Esophagus muscularis mucosa (tissue), 4 donors: ENCODE measurements at regions of chr4 and their contacts with region 1.

Region 1: GRCh38 chr4:81405894-81406401 is 65.8 kb downstream of the RASGEF1B start:
- DNase-seq: no peak
- H3K4me3 ChIP-seq: peak overlapping the region in 3 of 4 donors; percentile 10 to 19 (median 17)
- H3K27ac ChIP-seq: no peak overlapping the region
- H3K4me1 ChIP-seq: peaks cover 0 to 9% (median 4%) of the 10 kb centered on the region in 4 donors
- H3K27me3 ChIP-seq: no peaks in the 10 kb centered on the region
- CTCF ChIP-seq: peak; percentile 72 to 85 (median 81)
- EP300 ChIP-seq: no peak
- POLR2A ChIP-seq: no peak

Region 2: DNA sequence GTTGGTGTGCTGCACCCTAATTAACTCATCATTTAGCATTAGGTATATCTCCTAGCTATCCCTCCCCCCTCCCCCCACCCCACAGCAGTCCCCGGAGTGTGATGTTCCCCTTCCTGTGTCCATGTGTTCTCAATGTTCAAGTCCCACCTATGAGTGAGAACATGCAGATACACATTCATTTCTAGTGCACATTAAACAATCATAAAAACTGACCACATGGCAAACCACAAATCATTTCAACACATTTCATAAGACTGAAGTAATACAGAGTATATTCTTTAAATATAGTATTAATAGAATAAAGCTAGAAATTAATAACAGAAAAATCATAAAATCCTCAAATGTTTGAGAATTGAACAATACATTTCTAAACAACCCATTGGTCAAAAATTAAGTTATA is 225.0 kb before region 1 on chr4:
- intact Hi-C with region 1: no loop called
- DNase-seq: no peak
- H3K4me3 ChIP-seq: no peak overlapping the region
- H3K27ac ChIP-seq: no peak overlapping the region
- H3K4me1 ChIP-seq: peaks cover 0 to 5% (median 0%) of the 10 kb centered on the region in 4 donors
- H3K27me3 ChIP-seq: no peaks in the 10 kb centered on the region
- CTCF ChIP-seq: no peak
- EP300 ChIP-seq: no peak
- POLR2A ChIP-seq: no peak

Region 3: GRCh38 chr4:81353861-81354260 is 52.1 kb before region 1 on chr4:
- intact Hi-C with region 1: no loop called
- DNase-seq: no peak
- H3K4me3 ChIP-seq: no peak overlapping the region
- H3K27ac ChIP-seq: no peak overlapping the region
- H3K4me1 ChIP-seq: no peaks in the 10 kb centered on the region
- H3K27me3 ChIP-seq: no peaks in the 10 kb centered on the region
- CTCF ChIP-seq: no peak
- EP300 ChIP-seq: no peak
- POLR2A ChIP-seq: no peak

Region 4: GRCh38 chr4:81844717-81845116 is 438.8 kb after region 1 on chr4:
- intact Hi-C with region 1: loop called (anchors 5 kb)
- DNase-seq: no peak
- H3K4me3 ChIP-seq: no peak overlapping the region
- H3K27ac ChIP-seq: no peak overlapping the region
- H3K4me1 ChIP-seq: peaks cover 0 to 5% (median 2%) of the 10 kb centered on the region in 4 donors
- H3K27me3 ChIP-seq: no peaks in the 10 kb centered on the region
- CTCF ChIP-seq: peak; percentile 78 to 83 (median 81)
- EP300 ChIP-seq: no peak
- POLR2A ChIP-seq: no peak

Region 5: DNA sequence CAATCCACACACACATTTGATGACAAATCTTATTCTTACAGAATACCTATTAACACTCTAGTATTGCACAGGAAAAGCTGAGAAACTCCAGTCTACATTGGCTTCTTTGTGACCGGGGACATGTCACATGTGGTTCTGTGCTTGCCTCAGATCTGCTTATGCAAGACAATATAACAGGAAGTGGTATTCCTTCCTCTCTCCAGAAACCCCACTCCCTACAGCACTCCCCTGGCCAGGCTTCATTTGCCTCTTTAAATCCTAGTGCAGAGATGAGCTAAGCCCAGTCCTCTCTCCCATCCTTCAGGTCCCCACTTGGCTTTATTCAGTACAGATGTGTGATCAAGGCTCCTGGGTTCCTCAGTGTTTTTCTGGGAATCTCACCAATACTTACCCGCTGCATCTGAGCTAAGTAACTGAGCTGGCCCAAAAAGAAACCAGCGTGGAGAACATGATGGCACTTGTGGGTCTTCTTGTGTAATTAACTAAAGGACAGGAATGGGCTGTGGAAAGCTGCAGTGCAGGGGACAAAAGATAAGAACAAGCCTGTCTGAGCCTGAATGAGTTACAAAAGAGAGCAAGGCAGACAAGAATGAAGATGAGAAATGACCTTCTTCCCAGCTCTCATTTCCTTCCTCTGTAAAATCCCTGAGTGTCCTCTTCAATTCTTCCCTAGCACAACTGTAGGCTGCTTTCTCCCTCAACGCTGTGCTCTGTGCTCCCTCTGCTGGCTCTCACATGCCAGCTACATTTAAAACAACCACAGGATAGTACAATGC is 862.3 kb after region 1 on chr4:
- intact Hi-C with region 1: loop called (anchors 2 kb)
- DNase-seq: no peak
- H3K4me3 ChIP-seq: no peak overlapping the region
- H3K27ac ChIP-seq: no peak overlapping the region
- H3K4me1 ChIP-seq: peaks cover 0 to 3% (median 0%) of the 10 kb centered on the region in 4 donors
- H3K27me3 ChIP-seq: no peaks in the 10 kb centered on the region
- CTCF ChIP-seq: peak; percentile 56 to 76 (median 63)
- EP300 ChIP-seq: no peak
- POLR2A ChIP-seq: no peak

Region 6: GRCh38 chr4:82360298-82361177 is 954.6 kb after region 1 on chr4:
- intact Hi-C with region 1: loop called (anchors 5 kb)
- DNase-seq: no peak
- H3K4me3 ChIP-seq: no peak overlapping the region
- H3K27ac ChIP-seq: peak overlapping the region in 3 of 4 donors; percentile 31 to 73 (median 55)
- H3K4me1 ChIP-seq: peaks cover 63 to 91% (median 83%) of the 10 kb centered on the region in 4 donors
- H3K27me3 ChIP-seq: no peaks in the 10 kb centered on the region
- CTCF ChIP-seq: peak; percentile 68 to 76 (median 71)
- EP300 ChIP-seq: no peak
- POLR2A ChIP-seq: no peak